ENCODE measurements at regions of chr1 and their contacts with region 1.

Region 1: GRCh38 chr1:209248649-209249279 is 334.8 kb upstream of the CAMK1G start:
- DNase-seq: peak; percentile 16
- H3K4me3 ChIP-seq: no peak overlapping the region
- H3K27ac ChIP-seq: no peak overlapping the region
- H3K27me3 ChIP-seq: no peaks in the 10 kb centered on the region
- CTCF ChIP-seq: peak; percentile 89

Region 2: GRCh38 chr1:209051570-209051969 is 197.2 kb before region 1 on chr1:
- CTCF ChIA-PET with region 1: no interaction called
- POLR2A ChIA-PET with region 1: no interaction called
- DNase-seq: no peak
- H3K4me3 ChIP-seq: no peak overlapping the region
- H3K27ac ChIP-seq: no peak overlapping the region
- H3K27me3 ChIP-seq: no peaks in the 10 kb centered on the region
- CTCF ChIP-seq: no peak

Region 3: DNA sequence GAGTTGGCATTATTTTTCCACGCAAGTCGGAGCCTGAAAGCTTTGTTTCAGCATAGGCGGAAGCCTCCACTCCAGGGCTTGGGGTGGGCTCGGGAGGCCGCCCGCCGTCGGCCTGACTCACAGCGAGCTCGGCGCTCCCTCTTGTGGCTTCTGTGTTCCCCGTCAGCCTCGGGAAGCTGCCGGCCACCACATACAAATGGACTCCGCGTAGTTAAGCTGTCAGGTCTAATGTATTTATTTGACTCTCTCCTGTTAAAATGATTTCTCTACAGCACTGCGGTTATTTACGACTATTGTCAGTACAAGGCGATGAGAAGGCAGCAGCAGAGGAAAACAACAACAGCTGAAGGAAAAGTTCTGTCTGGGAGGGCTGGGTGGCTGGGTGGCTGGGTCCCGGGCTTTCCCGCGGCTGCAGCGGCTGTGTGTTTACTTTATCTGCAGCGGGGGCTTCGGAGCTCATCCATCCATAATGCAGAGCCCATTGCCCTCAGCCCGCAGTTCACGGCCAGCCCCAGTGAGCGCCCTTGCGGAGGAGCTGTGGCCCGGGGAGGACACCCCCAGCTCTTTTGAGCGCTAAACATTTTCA is 41.0 kb before region 1 on chr1:
- CTCF ChIA-PET with region 1: interaction called, 49 read pairs
- POLR2A ChIA-PET with region 1: no interaction called
- DNase-seq: peak; percentile 15
- H3K4me3 ChIP-seq: peak overlapping the region; percentile 28; the same call in 1 of the 2 replicates
- H3K27ac ChIP-seq: no peak overlapping the region
- H3K27me3 ChIP-seq: peaks cover 9% of the 10 kb centered on the region
- CTCF ChIP-seq: peak; percentile 77

Region 4: GRCh38 chr1:209229494-209230059 is 19.2 kb before region 1 on chr1:
- CTCF ChIA-PET with region 1: interaction called, 29 read pairs
- POLR2A ChIA-PET with region 1: no interaction called
- DNase-seq: no peak
- H3K4me3 ChIP-seq: no peak overlapping the region
- H3K27ac ChIP-seq: no peak overlapping the region
- H3K27me3 ChIP-seq: no peaks in the 10 kb centered on the region
- CTCF ChIP-seq: no peak

Region 5: DNA sequence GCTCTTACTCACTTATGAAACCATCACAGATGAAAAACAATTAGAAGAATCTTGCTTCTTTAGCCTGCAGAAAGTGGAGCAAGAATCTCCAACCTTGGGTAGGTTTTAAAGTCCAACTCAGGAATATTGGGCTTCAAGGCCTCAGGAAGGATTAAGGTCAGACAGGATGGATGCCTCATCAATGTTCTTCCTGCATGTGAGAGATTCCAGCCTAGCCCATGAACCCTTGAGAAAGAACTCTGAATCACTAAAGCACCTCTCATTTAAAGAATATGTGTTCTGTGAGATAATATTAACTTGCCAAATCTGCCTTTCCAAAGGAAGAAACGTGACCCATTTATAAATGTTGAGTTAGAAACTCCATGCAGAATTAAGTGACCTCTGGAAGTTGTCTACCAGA is 10.4 kb before region 1 on chr1:
- CTCF ChIA-PET with region 1: interaction called, 43 read pairs
- POLR2A ChIA-PET with region 1: no interaction called
- DNase-seq: no peak
- H3K4me3 ChIP-seq: no peak overlapping the region
- H3K27ac ChIP-seq: no peak overlapping the region
- H3K27me3 ChIP-seq: peaks cover 2% of the 10 kb centered on the region
- CTCF ChIP-seq: no peak

Region 6: DNA sequence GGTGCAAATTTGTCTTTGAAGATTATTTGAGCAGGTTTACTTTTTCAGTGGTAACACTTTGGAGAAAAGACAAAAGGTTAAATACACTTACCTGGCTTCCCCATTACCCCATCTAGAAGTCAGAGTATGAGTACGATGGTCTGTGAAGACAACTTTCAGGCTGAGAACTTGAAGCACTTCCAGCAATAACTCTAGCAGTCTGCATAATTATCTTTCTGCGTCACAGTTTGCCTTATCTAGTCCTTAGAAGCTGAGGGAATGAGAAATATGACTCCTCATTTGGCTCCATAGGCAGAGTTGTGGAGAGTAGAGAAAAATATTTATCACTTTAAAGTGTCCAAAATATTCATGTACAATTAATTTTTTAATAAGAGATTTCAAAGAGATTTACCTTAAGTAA is 11.4 kb after region 1 on chr1:
- CTCF ChIA-PET with region 1: interaction called, 56 read pairs
- POLR2A ChIA-PET with region 1: no interaction called
- DNase-seq: no peak
- H3K4me3 ChIP-seq: no peak overlapping the region
- H3K27ac ChIP-seq: no peak overlapping the region
- H3K27me3 ChIP-seq: no peaks in the 10 kb centered on the region
- CTCF ChIP-seq: no peak

Region 7: DNA sequence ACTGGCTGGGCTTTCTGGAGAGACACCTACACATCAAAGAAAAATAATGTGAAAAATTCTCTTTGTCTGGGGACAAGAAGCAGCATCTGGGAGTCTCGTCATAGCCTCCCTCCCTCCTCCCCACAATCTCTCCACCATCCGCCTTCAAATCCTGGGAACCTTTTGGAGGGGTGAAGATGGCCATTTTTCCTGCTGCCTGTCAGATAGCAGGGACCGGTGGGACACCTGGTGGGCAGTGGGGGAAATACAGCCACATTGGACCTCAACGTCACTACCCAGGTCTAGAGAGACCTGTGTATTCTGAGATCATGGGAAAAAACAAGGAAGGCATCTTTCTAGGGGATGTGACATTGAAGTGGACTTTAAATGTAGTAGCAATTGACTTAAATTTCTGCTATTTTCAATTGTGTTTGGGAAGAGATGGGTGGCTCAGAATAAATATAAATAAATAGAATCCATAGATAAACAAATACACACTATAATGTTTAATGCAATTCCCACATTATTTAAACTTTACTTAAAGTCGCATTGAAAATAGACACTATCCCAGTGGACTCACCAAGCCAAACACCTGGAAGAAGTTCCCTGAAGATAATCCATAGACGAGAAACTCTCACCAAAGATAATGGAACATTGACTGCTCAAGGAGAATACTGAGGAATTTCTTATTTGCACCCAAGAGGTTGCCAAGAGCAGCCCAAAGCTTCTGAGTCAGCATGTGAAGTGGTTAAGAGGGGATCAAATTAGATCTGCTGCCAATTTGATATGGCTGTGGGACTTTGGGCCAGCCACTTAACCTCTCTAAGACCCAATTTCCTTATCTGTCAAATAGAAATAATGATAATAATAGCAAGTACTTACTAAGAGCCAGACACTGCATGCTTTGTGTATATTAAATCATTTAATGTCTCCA is 187.1 kb after region 1 on chr1:
- CTCF ChIA-PET with region 1: interaction called, 18 read pairs
- POLR2A ChIA-PET with region 1: no interaction called
- DNase-seq: peak; percentile 38
- H3K4me3 ChIP-seq: no peak overlapping the region
- H3K27ac ChIP-seq: no peak overlapping the region
- H3K27me3 ChIP-seq: no peaks in the 10 kb centered on the region
- CTCF ChIP-seq: peak; percentile 97